ENCODE measurements at regions of chr4 and their contacts with region 1.

Region 1: DNA sequence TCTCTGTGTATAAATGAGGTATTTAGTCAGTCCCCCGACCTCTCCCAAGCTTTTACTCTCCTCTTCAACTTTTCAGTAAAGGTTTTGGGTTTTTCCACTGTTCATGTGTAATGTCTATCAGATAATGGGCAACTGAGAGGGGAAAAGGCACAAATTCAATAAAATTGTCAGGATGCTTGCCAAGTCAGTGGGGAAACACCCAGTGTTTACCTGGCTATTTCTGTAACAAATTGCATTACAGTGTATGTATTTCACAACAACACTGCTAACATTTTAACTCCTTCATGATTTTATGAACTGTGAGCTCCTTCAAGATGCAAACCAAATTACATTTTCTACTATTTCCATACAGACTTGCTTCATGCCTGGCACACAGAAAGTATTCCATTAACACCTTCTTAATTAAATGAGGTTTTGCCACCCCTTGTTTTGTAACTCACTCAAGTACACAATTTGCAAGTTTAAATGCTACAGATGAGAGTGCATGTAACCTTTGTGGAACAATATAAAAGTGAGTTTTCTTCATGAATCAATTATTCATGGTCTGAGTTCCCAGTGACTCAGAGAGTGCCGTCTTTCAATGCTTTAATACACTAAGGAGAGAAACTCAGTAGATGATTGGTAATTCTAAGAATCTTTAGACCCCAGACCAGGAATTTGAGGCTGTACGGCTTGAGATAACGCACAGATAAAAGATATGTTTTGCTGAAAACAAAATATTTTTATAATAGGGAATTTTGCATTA is 149.8 kb upstream of the TLL1 start:
- DNase-seq: peak; percentile 47
- H3K4me3 Mint-ChIP-seq: no peak overlapping the region
- H3K27ac Mint-ChIP-seq: no peak overlapping the region
- H3K4me1 Mint-ChIP-seq: peaks cover 9% of the 10 kb centered on the region
- H3K27me3 Mint-ChIP-seq: no peaks in the 10 kb centered on the region
- CTCF ChIP-seq: no peak

Region 2: DNA sequence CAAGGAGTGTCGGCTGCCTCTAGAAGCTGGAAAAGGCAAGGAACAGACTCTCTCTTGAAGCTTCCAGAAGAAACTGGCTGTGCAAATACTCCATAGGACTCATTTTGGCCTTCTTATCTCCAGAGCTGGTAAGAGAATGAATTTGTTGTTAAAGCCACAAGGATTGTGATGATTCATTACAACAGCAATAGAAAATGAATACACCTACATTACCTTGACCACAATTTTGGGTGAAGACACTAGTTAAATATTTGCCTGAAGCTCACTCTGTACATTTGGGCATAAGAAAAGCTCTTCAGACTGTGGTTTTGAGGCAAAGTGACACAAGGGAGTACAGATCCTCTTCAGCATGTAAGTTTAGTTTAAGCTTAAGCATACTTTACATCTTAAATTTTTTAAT is 15.3 kb after region 1 on chr4:
- CTCF ChIA-PET with region 1: interaction called, 4 read pairs
- POLR2A ChIA-PET with region 1: interaction called, 11 read pairs
- intact Hi-C with region 1: no loop called
- DNase-seq: peak; percentile 60
- H3K4me3 Mint-ChIP-seq: peak overlapping the region; percentile 66
- H3K27ac Mint-ChIP-seq: peak overlapping the region; percentile 93
- H3K4me1 Mint-ChIP-seq: peaks cover 20% of the 10 kb centered on the region
- H3K27me3 Mint-ChIP-seq: no peaks in the 10 kb centered on the region
- CTCF ChIP-seq: no peak